Cardiac septum (tissue), 1 donor: ENCODE measurements at regions of chr4 and their contacts with region 1.

Region 1: GRCh38 chr4:159540501-159540900 is 437.6 kb downstream of the RAPGEF2 start:
- DNase-seq: no peak

Region 2: DNA sequence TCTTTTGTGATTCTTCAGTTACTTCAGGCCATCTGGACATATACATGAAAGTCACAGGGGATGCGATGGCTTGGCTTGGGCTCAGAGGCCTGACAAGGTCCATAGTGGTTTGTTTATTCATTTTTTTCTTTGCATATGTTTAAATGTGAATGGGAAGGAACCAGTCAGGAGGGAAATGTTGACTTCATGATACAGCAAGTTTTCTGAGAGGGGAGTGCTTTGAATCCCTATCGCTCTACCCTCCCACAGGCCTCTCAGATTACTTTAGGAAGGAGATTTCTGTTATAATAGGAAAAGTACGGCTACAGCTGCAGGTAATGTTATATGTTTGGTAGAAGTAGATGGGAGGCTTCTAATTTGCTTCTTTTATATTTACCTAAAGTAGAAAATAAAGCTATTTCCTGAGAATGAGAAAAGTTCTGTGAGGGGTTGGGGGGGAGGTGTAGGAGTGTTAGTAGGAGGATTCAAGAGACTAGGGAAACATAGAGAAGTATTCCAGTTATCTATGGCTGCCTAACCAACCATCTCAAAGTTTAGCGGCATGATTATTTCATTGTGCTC is 114.7 kb before region 1 on chr4:
- intact Hi-C with region 1: no loop called
- DNase-seq: no peak

Region 3: GRCh38 chr4:159503236-159504008 is 37.1 kb before region 1 on chr4:
- intact Hi-C with region 1: loop called (anchors 2 kb)
- DNase-seq: no peak